Panc1 (cell line): ENCODE measurements at regions of chr3 and their contacts with region 1.

Region 1: GRCh38 chr3:112407214-112407887 is 74.4 kb downstream of the CD200 start:
- DNase-seq: no peak
- ATAC-seq: no peak
- H3K4me3 ChIP-seq: no peak overlapping the region
- H3K27ac ChIP-seq: no peak overlapping the region
- H3K4me1 ChIP-seq: no peaks in the 10 kb centered on the region
- H3K27me3 ChIP-seq: no peaks in the 10 kb centered on the region
- CTCF ChIP-seq: no peak

Region 2: GRCh38 chr3:112293368-112294321 is 113.7 kb before region 1 on chr3 and contains the start of gene SLC9C1:
- CTCF ChIA-PET with region 1: no interaction called
- POLR2A ChIA-PET with region 1: interaction called, 10 read pairs
- in situ Hi-C with region 1: no loop called
- intact Hi-C with region 1: no loop called
- DNase-seq: peak; percentile 58
- ATAC-seq: peak; percentile 92
- H3K4me3 ChIP-seq: peak within 1 kb of the TSS; percentile 19 to 49
- H3K27ac ChIP-seq: no peak within 1 kb of the TSS
- H3K4me1 ChIP-seq: no peaks in the 10 kb centered on the region
- H3K27me3 ChIP-seq: no peaks in the 10 kb centered on the region
- CTCF ChIP-seq: peak; percentile 78
- total RNA-seq, gene SLC9C1: not detected

Region 3: DNA sequence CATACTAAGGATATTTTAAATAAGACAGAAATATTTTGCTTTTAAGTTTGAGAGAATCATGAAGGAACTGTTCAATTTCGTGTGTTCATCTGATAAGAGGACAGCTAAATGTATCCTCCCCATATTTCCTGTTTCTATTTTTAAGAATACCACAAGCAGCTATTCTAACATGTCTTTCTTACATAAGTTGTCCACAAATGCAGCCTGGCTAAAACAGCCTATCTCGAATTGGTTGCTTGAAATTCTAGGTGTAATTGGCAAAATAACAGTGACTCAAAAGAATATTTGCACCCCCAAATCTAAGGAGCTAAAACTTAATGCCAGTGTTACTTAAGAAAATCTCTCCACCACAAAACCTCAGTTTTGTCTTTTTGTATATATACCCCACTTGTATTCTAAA is 56.9 kb after region 1 on chr3:
- CTCF ChIA-PET with region 1: no interaction called
- POLR2A ChIA-PET with region 1: no interaction called
- in situ Hi-C with region 1: no loop called
- intact Hi-C with region 1: no loop called
- DNase-seq: no peak
- ATAC-seq: no peak
- H3K4me3 ChIP-seq: no peak overlapping the region
- H3K27ac ChIP-seq: no peak overlapping the region
- H3K4me1 ChIP-seq: no peaks in the 10 kb centered on the region; the same call in 1 of the 2 replicates
- H3K27me3 ChIP-seq: no peaks in the 10 kb centered on the region
- CTCF ChIP-seq: no peak